CD8-positive, alpha-beta T cell (primary cell): ENCODE measurements at regions of chr1 and their contacts with region 1.

Region 1: GRCh38 chr1:11037740-11038182 is 9.3 kb downstream of the MASP2 start:
- DNase-seq: peak; percentile 81 to 94 (median 91)
- ATAC-seq: peak; percentile 100
- H3K4me3 ChIP-seq: no peak overlapping the region
- H3K4me3 Mint-ChIP-seq: no peak overlapping the region
- H3K27ac ChIP-seq: no peak overlapping the region
- H3K27ac Mint-ChIP-seq: no peak overlapping the region
- H3K4me1 ChIP-seq: peaks cover 4% of the 10 kb centered on the region
- H3K4me1 Mint-ChIP-seq: peaks cover 7% of the 10 kb centered on the region
- H3K27me3 ChIP-seq: peaks cover 0 to 3% of the 10 kb centered on the region in 2 experiments
- H3K27me3 Mint-ChIP-seq: peaks cover 6% of the 10 kb centered on the region
- CTCF ChIP-seq: peak; percentile 93

Region 2: GRCh38 chr1:10415211-10415930 is 622.4 kb before region 1 on chr1:
- CTCF ChIA-PET with region 1: no interaction called
- POLR2A ChIA-PET with region 1: no interaction called
- intact Hi-C with region 1: no loop called
- DNase-seq: peak in 1 of 9 experiments; percentile 20
- ATAC-seq: no peak
- H3K4me3 ChIP-seq: no peak overlapping the region
- H3K4me3 Mint-ChIP-seq: no peak overlapping the region
- H3K27ac ChIP-seq: no peak overlapping the region
- H3K27ac Mint-ChIP-seq: peak overlapping the region; percentile 27
- H3K4me1 ChIP-seq: no peaks in the 10 kb centered on the region
- H3K4me1 Mint-ChIP-seq: peaks cover 4% of the 10 kb centered on the region
- H3K27me3 ChIP-seq: no peaks in the 10 kb centered on the region
- H3K27me3 Mint-ChIP-seq: no peaks in the 10 kb centered on the region
- CTCF ChIP-seq: no peak

Region 3: GRCh38 chr1:10507111-10507879 is 530.5 kb before region 1 on chr1:
- CTCF ChIA-PET with region 1: no interaction called
- POLR2A ChIA-PET with region 1: no interaction called
- intact Hi-C with region 1: no loop called
- DNase-seq: peak; percentile 22 to 76 (median 57)
- ATAC-seq: peak; percentile 59
- H3K4me3 ChIP-seq: no peak overlapping the region
- H3K4me3 Mint-ChIP-seq: no peak overlapping the region
- H3K27ac ChIP-seq: no peak overlapping the region
- H3K27ac Mint-ChIP-seq: peak overlapping the region; percentile 39
- H3K4me1 ChIP-seq: peaks cover 35% of the 10 kb centered on the region
- H3K4me1 Mint-ChIP-seq: peaks cover 44% of the 10 kb centered on the region
- H3K27me3 ChIP-seq: no peaks in the 10 kb centered on the region
- H3K27me3 Mint-ChIP-seq: no peaks in the 10 kb centered on the region
- CTCF ChIP-seq: peak; percentile 81

Region 4: GRCh38 chr1:11026052-11026451 is 11.7 kb before region 1 on chr1:
- CTCF ChIA-PET with region 1: interaction called, 17 read pairs
- POLR2A ChIA-PET with region 1: interaction called, 4 read pairs
- intact Hi-C with region 1: no loop called
- DNase-seq: no peak
- ATAC-seq: no peak
- H3K4me3 ChIP-seq: no peak overlapping the region
- H3K4me3 Mint-ChIP-seq: no peak overlapping the region
- H3K27ac ChIP-seq: no peak overlapping the region
- H3K27ac Mint-ChIP-seq: no peak overlapping the region
- H3K4me1 ChIP-seq: no peaks in the 10 kb centered on the region
- H3K4me1 Mint-ChIP-seq: peaks cover 28% of the 10 kb centered on the region
- H3K27me3 ChIP-seq: no peaks in the 10 kb centered on the region
- H3K27me3 Mint-ChIP-seq: no peaks in the 10 kb centered on the region
- CTCF ChIP-seq: no peak

Region 5: GRCh38 chr1:11068600-11069473 is 31.1 kb after region 1 on chr1:
- CTCF ChIA-PET with region 1: interaction called, 57 read pairs
- POLR2A ChIA-PET with region 1: no interaction called
- intact Hi-C with region 1: no loop called
- DNase-seq: no peak
- ATAC-seq: no peak
- H3K4me3 ChIP-seq: no peak overlapping the region
- H3K4me3 Mint-ChIP-seq: no peak overlapping the region
- H3K27ac ChIP-seq: no peak overlapping the region
- H3K27ac Mint-ChIP-seq: no peak overlapping the region
- H3K4me1 ChIP-seq: no peaks in the 10 kb centered on the region
- H3K4me1 Mint-ChIP-seq: no peaks in the 10 kb centered on the region
- H3K27me3 ChIP-seq: no peaks in the 10 kb centered on the region
- H3K27me3 Mint-ChIP-seq: no peaks in the 10 kb centered on the region
- CTCF ChIP-seq: no peak

Region 6: DNA sequence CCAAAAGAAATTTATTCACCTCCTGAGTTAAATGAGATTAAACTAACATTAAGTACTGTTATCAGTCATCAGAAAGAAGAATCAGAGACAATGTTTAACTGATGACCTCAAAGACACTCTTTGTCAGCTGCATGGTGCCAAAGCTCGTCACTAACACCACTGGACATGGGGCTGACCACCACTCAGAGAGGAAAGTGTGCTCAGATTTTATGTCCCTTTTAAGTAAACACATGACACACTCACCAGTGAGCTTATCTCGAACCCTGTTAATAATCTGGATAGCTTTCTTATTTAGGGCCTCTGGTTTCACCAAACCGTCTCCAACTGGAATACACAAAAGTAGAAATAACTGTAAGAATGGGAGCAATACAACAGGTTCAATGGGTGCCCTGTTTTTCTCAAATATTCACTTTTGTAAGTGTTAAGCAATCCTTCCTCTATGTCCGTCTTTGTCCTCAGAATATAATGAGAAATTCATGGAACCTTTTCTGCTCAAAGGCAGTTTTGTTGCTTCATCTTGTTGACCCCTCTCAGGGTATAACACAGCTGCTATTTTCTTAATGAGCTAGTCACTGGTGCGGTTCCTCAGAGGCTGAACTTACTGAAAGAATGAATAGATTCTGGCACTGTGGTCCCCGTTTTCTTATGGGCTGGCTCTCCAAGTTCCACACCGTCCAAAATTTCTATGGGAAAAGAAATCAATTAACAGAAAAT is 71.4 kb after region 1 on chr1:
- CTCF ChIA-PET with region 1: interaction called, 14 read pairs
- POLR2A ChIA-PET with region 1: no interaction called
- intact Hi-C with region 1: loop called in 1 of 2 experiments (anchors 5 kb)
- DNase-seq: peak in 1 of 9 experiments; percentile 5
- ATAC-seq: no peak
- H3K4me3 ChIP-seq: no peak overlapping the region
- H3K4me3 Mint-ChIP-seq: no peak overlapping the region
- H3K27ac ChIP-seq: no peak overlapping the region
- H3K27ac Mint-ChIP-seq: no peak overlapping the region
- H3K4me1 ChIP-seq: no peaks in the 10 kb centered on the region
- H3K4me1 Mint-ChIP-seq: no peaks in the 10 kb centered on the region
- H3K27me3 ChIP-seq: no peaks in the 10 kb centered on the region
- H3K27me3 Mint-ChIP-seq: no peaks in the 10 kb centered on the region
- CTCF ChIP-seq: no peak

Region 7: DNA sequence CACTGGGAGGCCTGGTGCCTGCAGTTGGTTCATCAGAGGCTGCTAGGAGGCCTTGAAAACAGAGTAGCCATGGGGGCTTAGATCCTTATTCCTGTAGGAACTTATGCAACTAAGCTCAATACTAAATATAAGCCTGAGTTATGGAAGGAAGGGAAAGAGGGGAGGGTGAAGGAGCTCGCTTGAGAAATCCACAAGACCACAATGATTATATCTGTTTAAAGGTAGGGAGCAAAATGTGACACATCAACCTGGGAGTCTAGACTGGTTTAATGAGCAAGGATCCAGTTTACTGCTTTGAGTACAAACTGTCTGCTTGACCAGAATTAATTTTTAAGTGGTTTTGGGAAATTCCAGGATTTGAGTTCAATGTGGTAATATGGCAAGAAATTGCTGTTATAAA is 131.0 kb after region 1 on chr1:
- CTCF ChIA-PET with region 1: interaction called, 16 read pairs
- POLR2A ChIA-PET with region 1: no interaction called
- intact Hi-C with region 1: no loop called
- DNase-seq: no peak
- ATAC-seq: no peak
- H3K4me3 ChIP-seq: no peak overlapping the region
- H3K4me3 Mint-ChIP-seq: no peak overlapping the region
- H3K27ac ChIP-seq: no peak overlapping the region
- H3K27ac Mint-ChIP-seq: no peak overlapping the region
- H3K4me1 ChIP-seq: no peaks in the 10 kb centered on the region
- H3K4me1 Mint-ChIP-seq: peaks cover 2% of the 10 kb centered on the region
- H3K27me3 ChIP-seq: no peaks in the 10 kb centered on the region
- H3K27me3 Mint-ChIP-seq: no peaks in the 10 kb centered on the region
- CTCF ChIP-seq: no peak

Region 8: DNA sequence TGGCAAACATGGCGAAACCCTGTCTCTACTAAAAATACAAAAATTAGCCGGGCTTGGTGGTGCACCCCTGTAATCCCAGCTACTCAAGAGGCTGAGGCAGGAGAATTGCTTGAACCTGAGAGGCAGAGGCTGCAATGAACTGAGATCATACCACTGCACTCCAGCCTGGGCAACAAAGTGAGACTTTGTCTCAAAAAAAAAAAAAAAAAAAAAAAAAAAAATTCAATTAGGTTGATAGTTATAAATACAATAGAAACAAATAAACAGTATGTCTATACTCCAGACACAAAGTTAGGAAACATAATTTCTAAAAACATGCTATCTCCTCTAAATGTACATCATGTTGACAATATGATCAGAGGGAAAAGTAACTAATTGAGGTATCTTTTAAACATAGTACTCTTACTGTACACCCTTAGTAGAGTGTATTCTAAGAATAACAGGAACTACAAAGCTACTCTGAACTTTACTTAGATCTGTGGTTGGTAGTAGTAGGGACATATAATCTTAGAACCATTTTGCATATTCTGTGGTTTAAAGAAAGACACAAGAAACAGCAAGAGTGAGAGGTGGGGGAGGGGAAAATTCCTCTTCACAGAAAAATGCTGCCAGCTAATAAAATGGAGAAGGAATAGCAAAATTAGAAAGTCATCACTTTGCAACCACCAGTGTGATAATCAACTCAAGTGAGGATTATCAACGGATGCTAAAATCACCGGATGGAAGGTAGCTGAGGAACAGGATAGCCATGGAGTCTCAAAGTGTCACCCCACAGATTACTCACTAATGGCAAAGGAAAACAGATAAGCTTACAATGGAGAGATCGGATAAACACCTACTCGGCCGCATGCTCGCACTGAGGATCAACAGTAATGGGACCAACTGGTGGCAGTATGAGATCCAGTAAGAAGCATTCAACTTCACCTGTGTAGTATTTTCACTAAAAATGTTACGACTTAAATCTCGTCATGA is 189.6 kb after region 1 on chr1:
- CTCF ChIA-PET with region 1: interaction called, 4 read pairs
- POLR2A ChIA-PET with region 1: no interaction called
- intact Hi-C with region 1: loop called in 1 of 2 experiments (anchors 5 kb)
- DNase-seq: no peak
- ATAC-seq: no peak
- H3K4me3 ChIP-seq: no peak overlapping the region
- H3K4me3 Mint-ChIP-seq: no peak overlapping the region
- H3K27ac ChIP-seq: no peak overlapping the region
- H3K27ac Mint-ChIP-seq: peak overlapping the region; percentile 77
- H3K4me1 ChIP-seq: peaks cover 5% of the 10 kb centered on the region
- H3K4me1 Mint-ChIP-seq: peaks cover 16% of the 10 kb centered on the region
- H3K27me3 ChIP-seq: no peaks in the 10 kb centered on the region
- H3K27me3 Mint-ChIP-seq: no peaks in the 10 kb centered on the region
- CTCF ChIP-seq: no peak

Region 9: GRCh38 chr1:11645670-11646265 is 608.0 kb after region 1 on chr1:
- CTCF ChIA-PET with region 1: interaction called, 104 read pairs
- POLR2A ChIA-PET with region 1: interaction called, 3 read pairs
- intact Hi-C with region 1: loop called in 1 of 2 experiments (anchors 1 kb)
- DNase-seq: peak; percentile 57 to 85 (median 81)
- ATAC-seq: peak; percentile 47
- H3K4me3 ChIP-seq: no peak overlapping the region
- H3K4me3 Mint-ChIP-seq: no peak overlapping the region
- H3K27ac ChIP-seq: no peak overlapping the region
- H3K27ac Mint-ChIP-seq: no peak overlapping the region
- H3K4me1 ChIP-seq: peaks cover 17% of the 10 kb centered on the region
- H3K4me1 Mint-ChIP-seq: peaks cover 15% of the 10 kb centered on the region
- H3K27me3 ChIP-seq: no peaks in the 10 kb centered on the region
- H3K27me3 Mint-ChIP-seq: no peaks in the 10 kb centered on the region
- CTCF ChIP-seq: peak; percentile 85